Heart left ventricle (tissue), 16 donors: ENCODE measurements at regions of chr17 and their contacts with region 1.

Region 1: GRCh38 chr17:45325810-45326209 is 9.0 kb upstream of the MAP3K14 start:
- DNase-seq: no peak
- ATAC-seq: peak in 3 of 4 donors; percentile 46 to 65 (median 56)
- H3K4me3 ChIP-seq: no peak overlapping the region
- H3K27ac ChIP-seq: peak overlapping the region in 1 of 12 donors; percentile 26
- H3K4me1 ChIP-seq: peaks cover 0 to 20% (median 2%) of the 10 kb centered on the region in 12 donors
- H3K27me3 ChIP-seq: no peaks in the 10 kb centered on the region
- CTCF ChIP-seq: no peak
- POLR2A ChIP-seq: no peak

Region 2: DNA sequence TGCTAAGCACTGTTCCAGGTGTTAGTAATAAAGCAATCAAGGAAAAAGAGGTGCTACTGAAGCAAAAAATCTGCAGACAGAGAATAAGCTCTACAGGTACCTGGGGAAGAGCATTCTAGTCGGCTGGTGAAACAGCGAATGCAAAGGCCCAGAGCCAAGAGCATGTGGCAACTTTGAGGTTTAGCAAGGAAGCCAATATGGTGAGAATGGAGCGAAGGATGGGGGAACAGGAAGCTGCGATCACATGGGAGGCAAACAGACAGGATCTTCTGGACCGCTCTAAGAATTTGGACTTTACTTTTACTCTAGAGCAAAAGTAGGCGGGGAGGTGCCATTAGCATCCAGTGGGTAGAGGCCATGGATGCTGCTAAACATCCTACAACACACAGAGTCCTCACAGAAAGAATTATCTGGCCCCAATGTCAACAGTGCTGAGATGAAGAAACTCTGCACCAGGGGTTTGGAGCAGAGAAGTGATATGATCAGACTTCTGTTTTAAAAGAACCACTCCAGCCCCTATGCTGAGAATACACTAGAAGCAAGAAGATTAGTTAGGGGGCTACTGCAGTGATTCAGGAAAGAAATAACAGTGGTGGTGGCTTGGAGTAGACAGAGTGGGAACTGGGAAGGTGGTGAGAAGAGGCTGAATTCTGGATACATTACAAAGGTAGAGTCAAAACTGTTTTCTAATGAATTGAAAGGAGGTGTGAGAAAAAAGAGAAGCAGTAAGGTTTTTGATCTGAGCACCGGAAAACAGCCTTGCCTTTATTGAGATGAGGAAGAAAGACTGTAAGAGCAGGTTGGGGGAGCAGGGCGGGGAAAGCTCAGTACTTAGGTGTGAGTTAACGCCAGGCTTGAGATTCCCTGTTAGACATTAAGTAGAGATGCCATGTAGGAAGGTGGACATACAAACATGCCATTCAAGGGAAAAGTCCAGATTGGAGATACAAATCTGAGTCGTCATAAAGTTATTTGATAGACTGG is 437.5 kb before region 1 on chr17:
- intact Hi-C with region 1: no loop called
- DNase-seq: no peak
- ATAC-seq: peak in 1 of 4 donors; percentile 20
- H3K4me3 ChIP-seq: no peak overlapping the region
- H3K27ac ChIP-seq: peak overlapping the region in 1 of 12 donors; percentile 40
- H3K4me1 ChIP-seq: peaks cover 0 to 28% (median 5%) of the 10 kb centered on the region in 12 donors
- H3K27me3 ChIP-seq: no peaks in the 10 kb centered on the region
- CTCF ChIP-seq: no peak
- POLR2A ChIP-seq: no peak

Region 3: DNA sequence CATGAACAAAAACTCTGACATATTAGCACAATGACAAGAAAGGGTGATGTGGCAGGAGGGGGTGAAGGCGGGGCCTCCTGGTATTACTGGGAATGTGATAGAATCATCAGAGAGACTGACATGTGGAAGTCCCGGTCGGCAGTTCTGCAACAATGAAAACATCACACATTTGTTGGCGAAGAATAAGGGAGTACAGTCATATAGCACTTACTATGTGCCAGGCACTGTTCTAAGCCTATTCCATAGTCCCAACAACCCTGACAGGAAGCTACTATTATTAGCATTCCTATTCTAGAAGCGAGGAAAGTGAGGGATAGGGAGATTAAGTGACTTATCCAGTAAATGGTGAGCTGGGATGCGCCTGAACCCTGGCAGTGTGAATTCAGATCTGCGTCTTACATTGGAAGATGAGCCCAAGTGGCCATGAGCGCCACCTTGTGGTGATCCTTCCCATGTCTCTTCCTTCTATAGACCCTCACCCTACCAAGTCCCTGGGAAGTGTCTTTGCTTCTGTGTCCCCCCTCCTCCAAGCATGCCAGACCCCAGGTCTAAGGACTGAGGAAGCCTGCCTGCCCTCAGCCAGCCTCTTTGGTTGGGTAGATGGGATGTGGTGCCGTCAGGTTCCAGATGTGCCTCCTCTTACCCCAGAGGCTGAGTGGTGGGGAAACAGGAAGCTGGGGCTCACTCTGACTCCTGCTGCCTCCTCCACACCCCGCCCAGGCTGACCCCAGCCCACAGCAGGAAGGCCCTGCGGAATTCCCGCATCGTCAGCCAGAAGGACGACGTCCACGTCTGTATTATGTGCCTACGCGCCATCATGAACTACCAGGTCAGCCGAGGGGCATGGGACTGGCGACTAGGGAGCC is 90.2 kb before region 1 on chr17:
- intact Hi-C with region 1: no loop called
- DNase-seq: peak in 4 of 5 donors; percentile 72 to 85 (median 78)
- ATAC-seq: peak; percentile 29 to 64 (median 47)
- H3K4me3 ChIP-seq: no peak overlapping the region
- H3K27ac ChIP-seq: peak overlapping the region in 1 of 12 donors; percentile 18
- H3K4me1 ChIP-seq: peaks cover 0 to 32% (median 6%) of the 10 kb centered on the region in 12 donors
- H3K27me3 ChIP-seq: no peaks in the 10 kb centered on the region
- CTCF ChIP-seq: peak; percentile 69 to 83 (median 77)
- POLR2A ChIP-seq: no peak

Region 4: GRCh38 chr17:45277216-45277849 is 48.5 kb before region 1 on chr17:
- intact Hi-C with region 1: no loop called
- DNase-seq: peak; percentile 90 to 97 (median 93)
- ATAC-seq: peak; percentile 62 to 76 (median 67)
- H3K4me3 ChIP-seq: peak overlapping the region in 1 of 12 donors; percentile 33
- H3K27ac ChIP-seq: peak overlapping the region; percentile 28 to 89 (median 78)
- H3K4me1 ChIP-seq: peaks cover 0 to 43% (median 26%) of the 10 kb centered on the region in 12 donors
- H3K27me3 ChIP-seq: no peaks in the 10 kb centered on the region
- CTCF ChIP-seq: peak; percentile 72 to 87 (median 82)
- POLR2A ChIP-seq: peak in 1 of 2 donors; percentile 25

Region 5: DNA sequence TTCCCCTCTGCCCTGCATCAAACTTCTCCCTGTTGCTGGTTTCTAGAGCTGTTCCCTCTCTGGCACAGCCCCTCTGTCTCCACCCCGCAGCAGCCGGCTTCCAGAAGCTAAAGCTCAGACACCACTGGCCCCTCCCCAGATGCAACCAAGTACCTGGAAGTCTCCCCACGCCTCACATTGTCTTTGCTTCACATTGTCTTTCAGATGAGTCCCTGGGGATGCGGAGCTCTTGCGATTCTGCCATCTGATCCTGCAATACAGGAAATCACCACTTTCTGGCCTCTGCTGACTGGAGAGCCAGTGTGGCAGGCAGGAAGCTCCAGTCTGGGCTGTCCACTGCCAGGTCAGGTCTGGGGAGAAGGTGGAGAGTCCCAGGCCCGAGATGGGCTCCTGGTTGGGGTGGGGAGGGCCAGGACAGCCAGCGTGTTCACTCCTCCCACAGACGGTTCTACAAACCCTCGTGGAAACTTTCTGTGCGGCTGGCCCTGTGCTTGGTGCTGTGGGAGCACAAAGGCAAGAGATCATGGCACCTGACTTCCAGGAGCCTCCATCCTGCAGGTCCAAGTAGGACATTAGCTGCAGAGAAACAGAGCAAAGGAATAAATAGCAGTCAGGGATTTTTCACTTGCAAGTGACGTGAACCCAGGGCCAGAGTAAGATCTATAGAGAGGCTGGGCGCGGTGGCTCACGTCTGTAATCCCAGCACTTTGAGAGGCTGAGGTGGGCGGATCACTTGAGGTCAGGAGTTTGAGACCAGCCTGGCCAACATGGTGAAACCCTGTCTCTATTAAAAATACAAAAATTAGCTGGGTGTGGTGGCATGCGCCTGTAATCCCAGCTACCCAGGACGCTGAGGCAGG is 39.0 kb after region 1 on chr17:
- intact Hi-C with region 1: loop called in 2 of 10 experiments (anchors 5 kb)
- DNase-seq: peak in 1 of 5 donors; percentile 50
- ATAC-seq: peak in 3 of 4 donors; percentile 29 to 78 (median 59)
- H3K4me3 ChIP-seq: no peak overlapping the region
- H3K27ac ChIP-seq: peak overlapping the region in 1 of 12 donors; percentile 34
- H3K4me1 ChIP-seq: peaks cover 0 to 5% (median 0%) of the 10 kb centered on the region in 12 donors
- H3K27me3 ChIP-seq: no peaks in the 10 kb centered on the region
- CTCF ChIP-seq: no peak
- POLR2A ChIP-seq: no peak